Panc1 (cell line): ENCODE measurements at regions of chr3 and their contacts with region 1.

Region 1: GRCh38 chr3:149638228-149639092 is 19.4 kb downstream of the WWTR1 start:
- DNase-seq: no peak
- ATAC-seq: peak; percentile 61
- H3K4me3 ChIP-seq: peak overlapping the region; percentile 19 to 40
- H3K27ac ChIP-seq: peak overlapping the region; percentile 90
- H3K4me1 ChIP-seq: peaks cover 86% of the 10 kb centered on the region
- H3K27me3 ChIP-seq: no peaks in the 10 kb centered on the region
- CTCF ChIP-seq: no peak

Region 2: DNA sequence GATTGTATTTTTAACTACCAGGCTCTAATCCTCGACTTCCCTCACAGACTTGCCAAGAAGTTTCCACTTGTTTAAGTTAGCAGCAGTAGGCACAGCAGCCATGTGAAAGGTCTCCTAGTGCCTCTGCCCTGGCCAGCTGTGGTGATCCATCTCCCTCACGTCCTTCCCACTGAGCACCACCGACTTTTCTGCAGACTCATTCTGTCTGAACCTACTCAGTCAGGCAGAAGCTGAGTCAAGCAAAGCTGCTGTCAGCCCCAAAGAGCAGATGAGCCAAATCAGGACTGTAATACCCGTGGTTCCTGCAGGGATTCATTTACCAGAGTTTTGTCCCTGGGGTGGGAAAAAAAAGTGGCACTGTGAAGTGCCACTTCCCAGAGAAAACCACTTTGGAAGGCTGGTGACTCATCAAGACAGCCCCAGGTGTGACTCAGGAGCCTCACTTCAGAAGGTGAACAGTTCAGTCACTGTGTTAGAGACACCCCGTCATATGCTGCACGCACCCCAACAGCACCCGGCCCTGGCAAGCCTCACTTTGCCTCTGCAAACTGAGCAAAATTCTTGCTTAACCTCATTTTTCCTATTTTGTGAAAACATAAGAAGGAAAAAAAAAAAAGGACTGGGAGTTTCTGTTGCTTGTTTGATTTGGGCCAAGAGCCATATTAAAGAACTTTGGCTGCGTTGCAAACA is 56.6 kb before region 1 on chr3:
- CTCF ChIA-PET with region 1: no interaction called
- POLR2A ChIA-PET with region 1: interaction called, 3 read pairs
- in situ Hi-C with region 1: no loop called
- intact Hi-C with region 1: loop called (anchors 5 kb)
- DNase-seq: peak; percentile 88
- ATAC-seq: peak; percentile 66
- H3K4me3 ChIP-seq: peak overlapping the region in 1 of 2 experiments; percentile 5; a peak in 2 of 4 replicates
- H3K27ac ChIP-seq: peak overlapping the region; percentile 100
- H3K4me1 ChIP-seq: peaks cover 100% of the 10 kb centered on the region
- H3K27me3 ChIP-seq: no peaks in the 10 kb centered on the region
- CTCF ChIP-seq: no peak

Region 3: DNA sequence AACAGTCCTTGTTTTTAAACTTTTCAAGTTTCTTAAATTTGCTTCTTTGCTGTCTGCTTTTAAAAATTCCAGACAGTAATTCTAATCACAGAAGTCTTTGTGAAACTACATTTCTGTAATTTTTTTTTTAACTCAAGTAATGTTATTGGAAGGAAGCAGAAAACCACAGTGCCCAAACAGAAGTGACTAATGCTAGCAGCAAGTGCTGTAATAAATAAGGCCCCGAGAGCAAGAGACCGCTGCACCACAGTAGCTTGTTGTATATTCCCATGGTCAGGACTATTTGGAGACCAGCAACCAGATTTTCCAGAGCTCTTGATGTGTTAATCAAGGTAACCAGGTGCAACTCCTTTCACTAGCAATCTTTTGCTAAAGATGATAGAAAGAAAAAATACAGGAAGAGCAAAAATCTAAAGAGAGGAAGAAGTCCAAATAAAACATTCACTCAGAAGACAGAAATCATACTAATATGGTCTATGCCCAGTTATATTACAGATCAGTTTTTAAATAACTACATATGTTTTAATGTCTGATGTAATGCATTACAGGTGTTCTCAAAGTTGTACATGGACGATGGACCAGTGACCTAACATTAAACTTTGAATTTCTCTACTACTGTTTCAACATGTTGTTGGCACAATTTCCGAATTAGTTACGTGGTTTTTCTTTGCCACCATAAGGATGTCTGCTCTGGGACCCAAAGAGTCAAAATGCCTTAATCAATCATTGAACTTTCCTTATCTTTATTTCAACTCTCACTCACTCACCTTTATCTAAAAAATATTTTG is 17.0 kb before region 1 on chr3:
- CTCF ChIA-PET with region 1: no interaction called
- POLR2A ChIA-PET with region 1: interaction called, 11 read pairs
- in situ Hi-C with region 1: no loop called
- intact Hi-C with region 1: no loop called
- DNase-seq: no peak
- ATAC-seq: no peak; the same call in 1 of the 2 replicates
- H3K4me3 ChIP-seq: no peak overlapping the region
- H3K27ac ChIP-seq: peak overlapping the region; percentile 100
- H3K4me1 ChIP-seq: peaks cover 89% of the 10 kb centered on the region
- H3K27me3 ChIP-seq: no peaks in the 10 kb centered on the region
- CTCF ChIP-seq: no peak

Region 4: GRCh38 chr3:149765762-149766334 is 127.4 kb after region 1 on chr3:
- CTCF ChIA-PET with region 1: no interaction called
- POLR2A ChIA-PET with region 1: interaction called, 16 read pairs
- in situ Hi-C with region 1: no loop called
- intact Hi-C with region 1: no loop called
- DNase-seq: no peak
- ATAC-seq: peak; percentile 70; the same call in 1 of the 2 replicates
- H3K4me3 ChIP-seq: no peak overlapping the region
- H3K27ac ChIP-seq: no peak overlapping the region
- H3K4me1 ChIP-seq: no peaks in the 10 kb centered on the region
- H3K27me3 ChIP-seq: peaks cover 3% of the 10 kb centered on the region; the same call in 1 of the 2 replicates
- CTCF ChIP-seq: peak; percentile 66; the same call in 1 of the 2 replicates

Region 5: DNA sequence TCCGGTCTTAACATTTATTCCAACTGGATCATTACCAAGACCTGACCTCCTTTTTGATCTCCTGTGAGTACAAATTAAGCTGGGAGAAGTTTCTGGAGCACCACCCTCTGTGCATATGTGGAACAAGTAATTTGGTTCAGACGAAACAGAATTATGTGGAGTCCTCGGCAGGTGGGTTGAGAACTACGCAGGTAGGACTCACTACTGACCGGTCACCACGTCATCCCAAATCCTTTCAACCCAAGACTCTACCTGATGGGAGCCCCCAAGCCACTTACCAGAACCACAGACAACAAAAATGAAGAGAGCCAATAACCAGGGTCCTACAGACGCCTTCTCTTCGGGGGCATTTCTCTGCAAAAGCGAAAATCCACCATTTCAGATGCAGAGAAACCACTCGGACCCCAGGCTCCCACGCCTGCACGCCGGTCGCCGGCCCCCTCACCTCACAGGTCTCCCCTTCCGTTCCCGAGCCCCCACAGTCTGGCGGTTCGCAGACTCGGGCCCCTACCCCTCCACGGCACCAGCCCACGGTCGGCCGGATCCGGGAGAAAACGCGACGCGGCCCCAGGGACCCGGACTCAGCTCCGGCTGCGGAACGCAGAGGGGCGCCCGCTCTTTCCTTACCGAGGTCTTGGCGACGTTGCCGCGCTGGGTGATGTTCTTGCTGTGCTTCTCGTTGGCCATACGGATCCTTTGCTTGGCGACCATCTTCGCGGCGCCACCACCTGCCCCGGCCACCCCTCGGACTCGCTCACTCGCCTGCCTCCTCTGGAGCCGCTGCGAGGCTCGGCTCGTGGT is 907.2 kb after region 1 on chr3:
- CTCF ChIA-PET with region 1: no interaction called
- POLR2A ChIA-PET with region 1: no interaction called
- in situ Hi-C with region 1: no loop called
- intact Hi-C with region 1: no loop called
- DNase-seq: no peak
- ATAC-seq: no peak
- H3K4me3 ChIP-seq: peak overlapping the region; percentile 67 to 85
- H3K27ac ChIP-seq: peak overlapping the region; percentile 90
- H3K4me1 ChIP-seq: peaks cover 30% of the 10 kb centered on the region
- H3K27me3 ChIP-seq: no peaks in the 10 kb centered on the region
- CTCF ChIP-seq: no peak